Activated B cell treated with CpG ODN at 0.5 μM for 24 hours (primary cell): ENCODE measurements at regions of chr16 and their contacts with region 1.

Region 1: DNA sequence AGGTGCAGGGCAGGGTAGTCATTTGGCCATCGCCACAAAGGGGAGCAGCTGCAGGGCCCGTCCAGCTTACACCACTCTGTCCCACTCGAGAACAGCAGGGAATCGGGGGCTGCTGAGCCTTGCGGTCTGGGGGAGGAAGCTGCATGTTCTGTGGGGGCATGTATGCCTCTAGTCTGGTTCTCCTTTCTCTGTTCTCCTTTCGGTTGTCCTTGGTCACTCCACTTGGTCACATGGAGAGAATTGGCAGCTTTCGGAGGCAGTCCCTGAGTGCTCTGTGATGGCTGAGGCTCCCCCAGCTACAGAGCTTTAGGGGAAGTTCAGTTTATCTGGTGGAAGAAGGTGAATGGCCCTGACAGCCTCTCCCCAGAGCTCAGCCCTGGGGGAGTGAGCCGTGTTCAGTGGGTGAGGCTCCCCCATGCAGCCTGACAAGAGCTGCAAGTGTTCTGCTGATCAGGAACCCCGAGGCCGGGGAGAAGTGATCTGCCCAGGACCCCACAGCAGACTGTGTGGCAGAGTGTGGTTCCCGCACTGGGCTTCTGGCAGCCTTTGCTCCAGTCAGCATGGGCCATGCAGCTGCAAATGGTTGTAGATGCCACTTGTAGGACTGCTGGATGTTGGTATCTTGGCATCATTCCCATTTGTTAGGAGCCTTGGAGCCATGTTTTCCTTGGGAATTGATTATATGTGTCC is 22.3 kb upstream of the SMPD3 start:
- DNase-seq: peak; percentile 40
- ATAC-seq: peak; percentile 92
- H3K4me3 Mint-ChIP-seq: peak overlapping the region; percentile 80
- H3K27ac Mint-ChIP-seq: peak overlapping the region; percentile 98
- H3K4me1 Mint-ChIP-seq: peaks cover 58% of the 10 kb centered on the region
- H3K27me3 Mint-ChIP-seq: no peaks in the 10 kb centered on the region
- CTCF ChIP-seq: no peak

Region 2: GRCh38 chr16:68367030-68367429 is 103.6 kb before region 1 on chr16:
- CTCF ChIA-PET with region 1: interaction called, 3 read pairs
- POLR2A ChIA-PET with region 1: no interaction called
- intact Hi-C with region 1: loop called (anchors 5 kb)
- DNase-seq: no peak
- ATAC-seq: no peak
- H3K4me3 Mint-ChIP-seq: no peak overlapping the region
- H3K27ac Mint-ChIP-seq: no peak overlapping the region
- H3K4me1 Mint-ChIP-seq: peaks cover 54% of the 10 kb centered on the region
- H3K27me3 Mint-ChIP-seq: no peaks in the 10 kb centered on the region
- CTCF ChIP-seq: no peak

Region 3: DNA sequence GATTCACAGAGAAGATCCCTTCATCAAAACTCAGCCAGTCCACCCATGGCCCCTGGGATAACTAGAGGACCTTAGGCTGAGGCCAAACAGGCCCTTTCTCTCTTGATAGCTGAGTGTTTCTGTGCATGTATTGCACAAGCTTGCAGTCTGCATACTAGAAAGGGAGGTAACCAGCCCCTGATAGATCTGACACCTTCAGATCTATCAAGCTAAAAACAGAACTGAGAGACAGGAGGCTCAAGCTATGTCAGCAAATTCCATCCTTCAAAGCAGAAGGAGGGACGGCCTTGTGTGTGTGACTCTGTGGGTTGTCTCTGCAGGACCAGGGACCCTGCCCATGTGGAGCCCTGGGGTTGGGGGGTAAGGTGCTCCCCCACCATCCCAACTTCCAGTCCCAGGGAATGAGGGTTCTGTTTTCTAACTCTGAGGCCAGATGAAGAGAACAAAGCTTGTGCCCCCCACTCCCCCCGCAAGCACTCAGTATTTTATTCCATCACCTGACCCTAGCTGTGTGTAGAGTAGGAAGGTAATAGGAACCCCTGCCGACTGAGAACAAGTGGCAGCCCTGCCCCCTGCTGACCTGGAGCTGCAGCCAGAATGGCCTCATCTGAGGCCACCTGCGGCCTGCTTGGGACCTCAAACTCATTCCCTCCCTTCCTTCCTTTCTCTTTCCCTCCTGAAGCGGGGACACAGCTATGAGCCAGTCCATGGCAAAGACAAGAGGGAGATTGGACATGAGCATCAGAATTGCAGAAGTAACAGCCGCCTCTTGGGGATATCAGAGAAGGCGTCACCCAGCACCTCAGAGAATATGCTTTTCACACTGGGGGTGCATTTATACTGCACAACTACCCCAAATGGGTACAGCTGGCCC is 86.1 kb before region 1 on chr16:
- CTCF ChIA-PET with region 1: no interaction called
- POLR2A ChIA-PET with region 1: interaction called, 11 read pairs
- intact Hi-C with region 1: no loop called
- DNase-seq: no peak
- ATAC-seq: peak; percentile 45
- H3K4me3 Mint-ChIP-seq: peak overlapping the region; percentile 11
- H3K27ac Mint-ChIP-seq: peak overlapping the region; percentile 73
- H3K4me1 Mint-ChIP-seq: peaks cover 59% of the 10 kb centered on the region
- H3K27me3 Mint-ChIP-seq: no peaks in the 10 kb centered on the region
- CTCF ChIP-seq: no peak

Region 4: DNA sequence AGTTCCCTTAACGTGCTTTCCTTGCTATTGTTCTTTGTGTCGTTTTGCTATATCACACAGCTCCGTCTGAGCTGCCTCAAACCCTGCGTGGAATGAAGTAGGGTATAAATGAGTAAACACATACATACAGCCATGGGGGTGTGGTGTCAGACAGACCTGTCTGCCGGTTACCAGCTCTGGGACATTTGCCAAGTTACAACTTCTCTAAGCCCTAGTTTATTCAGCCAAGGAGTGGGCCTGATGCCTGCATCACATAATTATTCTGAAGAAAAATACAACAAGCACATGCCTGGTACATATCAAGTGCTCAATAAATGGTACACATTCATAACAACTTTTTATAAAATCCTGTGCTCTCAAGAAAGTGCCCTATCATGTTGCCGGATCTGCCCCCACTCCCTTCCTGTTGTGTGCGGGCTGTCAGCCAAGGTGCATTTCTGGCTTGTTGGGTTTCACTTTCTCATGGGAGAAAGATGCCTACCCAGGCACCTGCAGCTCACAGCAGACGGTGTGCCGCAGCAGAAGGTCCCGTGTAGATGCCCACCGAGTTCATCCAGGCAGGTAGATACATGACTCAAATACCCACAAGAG is 52.8 kb before region 1 on chr16:
- CTCF ChIA-PET with region 1: no interaction called
- POLR2A ChIA-PET with region 1: interaction called, 9 read pairs
- intact Hi-C with region 1: loop called (anchors 2 kb)
- DNase-seq: peak; percentile 29
- ATAC-seq: peak; percentile 85
- H3K4me3 Mint-ChIP-seq: peak overlapping the region; percentile 76
- H3K27ac Mint-ChIP-seq: peak overlapping the region; percentile 94
- H3K4me1 Mint-ChIP-seq: peaks cover 30% of the 10 kb centered on the region
- H3K27me3 Mint-ChIP-seq: no peaks in the 10 kb centered on the region
- CTCF ChIP-seq: no peak

Region 5: DNA sequence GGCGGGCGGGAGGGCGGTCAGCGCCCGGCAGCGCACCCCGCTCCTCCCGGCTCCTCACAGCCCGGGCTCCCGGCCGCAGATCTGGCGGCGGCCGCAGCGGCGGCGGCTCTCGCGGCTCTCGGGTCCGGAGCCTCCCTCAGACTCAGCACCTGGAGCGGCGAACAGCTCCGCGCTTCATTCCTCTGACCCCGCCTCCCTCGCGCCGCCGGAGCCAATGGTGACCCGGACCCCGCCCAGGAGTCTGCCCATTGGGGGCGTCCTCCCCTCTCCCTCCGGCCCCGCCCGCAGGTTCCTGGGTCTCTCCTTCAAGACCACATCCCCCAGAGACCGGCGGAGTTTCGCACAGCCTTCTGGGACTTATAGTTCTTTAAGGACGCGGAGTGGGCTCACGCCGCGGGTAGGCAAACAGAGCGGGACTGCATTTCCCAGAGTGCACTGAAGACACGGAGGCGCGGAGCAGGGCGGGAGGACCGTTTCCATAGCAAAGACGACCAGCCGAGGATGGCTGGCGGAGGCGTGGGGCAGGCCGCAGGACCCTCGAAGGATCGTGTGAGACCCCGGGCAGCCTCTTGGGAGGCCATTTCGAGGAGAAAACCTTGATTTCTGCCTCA is 22.1 kb before region 1 on chr16 and contains the start of gene SMPD3:
- CTCF ChIA-PET with region 1: no interaction called
- POLR2A ChIA-PET with region 1: interaction called, 7 read pairs
- intact Hi-C with region 1: loop called (anchors 1 kb)
- DNase-seq: peak; percentile 95
- ATAC-seq: peak; percentile 98
- H3K4me3 Mint-ChIP-seq: peak within 1 kb of the TSS; percentile 61
- H3K27ac Mint-ChIP-seq: peak within 1 kb of the TSS; percentile 7
- H3K4me1 Mint-ChIP-seq: peaks cover 23% of the 10 kb centered on the region
- H3K27me3 Mint-ChIP-seq: peaks cover 12% of the 10 kb centered on the region
- CTCF ChIP-seq: no peak
- total RNA-seq, gene SMPD3: 0.35 and 0.76 TPM in 2 replicates

Region 6: GRCh38 chr16:68490829-68491575 is 20.4 kb after region 1 on chr16:
- CTCF ChIA-PET with region 1: no interaction called
- POLR2A ChIA-PET with region 1: no interaction called
- intact Hi-C with region 1: no loop called
- DNase-seq: no peak
- ATAC-seq: peak; percentile 37
- H3K4me3 Mint-ChIP-seq: no peak overlapping the region
- H3K27ac Mint-ChIP-seq: no peak overlapping the region
- H3K4me1 Mint-ChIP-seq: peaks cover 26% of the 10 kb centered on the region
- H3K27me3 Mint-ChIP-seq: peaks cover 6% of the 10 kb centered on the region
- CTCF ChIP-seq: no peak

Region 7: DNA sequence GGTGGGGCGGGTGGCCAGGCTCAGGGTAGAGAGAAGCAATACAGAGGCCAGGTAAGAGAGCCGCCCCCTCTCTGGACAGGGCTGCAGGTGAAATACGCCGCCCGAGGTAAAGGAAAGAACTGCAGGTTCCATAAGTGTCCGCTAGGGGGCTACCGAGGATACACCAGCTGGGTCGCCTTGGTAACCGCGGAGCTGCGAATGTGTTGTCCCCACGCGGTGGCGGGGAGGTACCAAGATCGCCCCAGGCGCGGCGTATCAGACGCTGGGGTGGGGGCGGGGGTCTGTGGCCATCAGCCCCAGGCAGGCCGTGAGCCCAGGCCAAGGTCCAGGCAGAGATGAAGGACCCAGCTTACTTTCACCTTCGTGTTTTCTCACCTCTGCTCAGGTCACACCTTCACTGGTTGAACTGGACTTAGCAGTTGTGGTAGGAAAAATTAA is 50.1 kb after region 1 on chr16:
- CTCF ChIA-PET with region 1: interaction called, 13 read pairs
- POLR2A ChIA-PET with region 1: no interaction called
- intact Hi-C with region 1: loop called (anchors 1 kb)
- DNase-seq: peak; percentile 69
- ATAC-seq: peak; percentile 98
- H3K4me3 Mint-ChIP-seq: peak overlapping the region; percentile 52
- H3K27ac Mint-ChIP-seq: peak overlapping the region; percentile 12
- H3K4me1 Mint-ChIP-seq: peaks cover 14% of the 10 kb centered on the region
- H3K27me3 Mint-ChIP-seq: no peaks in the 10 kb centered on the region
- CTCF ChIP-seq: peak; percentile 77